PC-9 (cell line): ENCODE measurements at regions of chr2 and their contacts with region 1.

Region 1: DNA sequence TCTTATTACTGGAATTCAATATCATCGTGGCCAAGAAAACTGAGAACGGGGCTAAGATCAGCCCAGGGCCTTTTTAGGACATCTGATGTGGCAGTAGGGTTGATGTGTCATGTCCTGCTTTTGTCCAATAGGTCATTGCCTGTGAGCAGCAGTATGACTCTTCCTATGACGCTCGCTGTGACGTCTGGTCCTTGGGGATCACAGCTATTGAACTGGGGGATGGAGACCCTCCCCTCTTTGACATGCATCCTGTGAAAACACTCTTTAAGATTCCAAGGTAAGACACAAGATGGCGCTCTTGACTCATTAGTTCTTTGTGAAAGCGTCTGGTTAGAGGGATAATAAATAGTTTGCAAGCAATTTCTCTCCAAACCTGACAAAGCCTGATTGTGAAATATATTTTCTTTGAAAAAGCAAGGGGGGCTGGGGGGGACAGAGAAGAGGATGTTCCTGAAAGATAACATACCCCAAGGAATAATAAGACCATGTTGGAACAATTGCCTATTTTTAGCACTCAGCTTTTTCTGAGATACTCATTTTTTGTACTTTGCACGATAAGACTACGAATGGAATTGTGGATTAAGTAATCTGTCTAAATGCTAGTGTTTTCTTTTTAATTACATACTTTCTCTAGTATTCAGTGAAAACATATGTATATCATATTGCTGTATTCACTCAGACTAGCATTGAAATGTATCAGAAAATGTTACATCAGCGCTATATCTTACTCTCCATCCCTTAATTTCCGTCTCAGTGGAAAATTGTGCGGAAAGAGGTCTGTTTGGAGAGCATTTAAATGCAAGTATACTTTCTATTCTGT is 58.1 kb downstream of the MYO3B start:
- DNase-seq: peak; percentile 22 to 45
- H3K4me3 ChIP-seq: no peak overlapping the region
- H3K27ac ChIP-seq: no peak overlapping the region
- H3K4me1 ChIP-seq: no peaks in the 10 kb centered on the region
- H3K27me3 ChIP-seq: no peaks in the 10 kb centered on the region
- CTCF ChIP-seq: peak; percentile 78

Region 2: GRCh38 chr2:170361090-170361936 is 125.2 kb after region 1 on chr2:
- CTCF ChIA-PET with region 1: no interaction called
- POLR2A ChIA-PET with region 1: no interaction called
- intact Hi-C with region 1: loop called (anchors 5 kb)
- DNase-seq: peak in 1 of 2 experiments; percentile 50
- H3K4me3 ChIP-seq: no peak overlapping the region
- H3K27ac ChIP-seq: no peak overlapping the region
- H3K4me1 ChIP-seq: no peaks in the 10 kb centered on the region
- H3K27me3 ChIP-seq: no peaks in the 10 kb centered on the region
- CTCF ChIP-seq: peak; percentile 80